OCI-LY7 (cell line): ENCODE measurements at regions of chr13 and their contacts with region 1.

Region 1: GRCh38 chr13:50123862-50124536 is 108.8 kb downstream of the KCNRG start:
- DNase-seq: no peak
- H3K4me3 ChIP-seq: peak overlapping the region; percentile 81
- H3K27ac ChIP-seq: peak overlapping the region; percentile 56
- H3K4me1 ChIP-seq: peaks cover 64% of the 10 kb centered on the region
- CTCF ChIP-seq: no peak

Region 2: DNA sequence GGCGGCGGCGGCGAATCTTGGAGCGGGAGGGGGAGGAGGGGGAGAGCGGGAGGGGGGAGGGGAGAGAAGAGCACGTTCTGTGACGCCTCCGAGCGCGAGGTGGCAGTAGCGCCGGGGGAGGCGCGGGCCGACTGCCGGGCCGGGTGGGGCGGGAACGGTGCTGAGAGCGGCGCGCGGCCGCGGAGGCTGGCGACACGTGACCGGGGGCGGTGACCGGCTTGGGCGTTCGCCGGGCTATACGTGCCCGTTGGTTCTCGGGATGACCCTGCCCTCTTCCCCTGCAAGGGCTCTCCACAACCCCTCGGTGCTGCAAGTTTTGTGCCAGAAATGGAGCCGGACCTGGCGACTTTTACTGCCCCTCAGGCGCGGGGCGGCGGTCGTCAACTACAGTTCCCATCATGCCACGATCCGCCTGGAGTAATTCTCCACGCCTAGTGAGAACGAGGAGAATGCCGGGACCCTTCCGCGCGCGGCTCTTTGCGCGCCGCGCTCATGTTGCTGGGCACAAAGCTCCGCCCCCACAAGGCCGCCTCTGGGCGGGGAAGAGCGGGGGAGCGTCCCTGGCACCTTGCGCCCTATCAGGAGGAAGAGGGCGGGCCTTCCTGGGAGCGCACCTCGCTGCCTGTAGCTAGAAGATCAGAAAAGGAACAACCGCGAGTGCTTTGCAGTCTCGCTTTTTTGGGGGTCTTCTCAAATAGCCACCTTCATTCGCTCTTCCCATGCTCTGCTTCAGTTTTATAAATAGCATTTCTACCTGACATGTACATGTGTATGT is 331.3 kb before region 1 on chr13 and contains the start of gene KPNA3:
- CTCF ChIA-PET with region 1: no interaction called
- POLR2A ChIA-PET with region 1: no interaction called
- intact Hi-C with region 1: loop called (anchors 5 kb)
- DNase-seq: peak; percentile 98
- H3K4me3 ChIP-seq: peak within 1 kb of the TSS; percentile 75
- H3K27ac ChIP-seq: peak within 1 kb of the TSS; percentile 90
- H3K4me1 ChIP-seq: peaks cover 24% of the 10 kb centered on the region
- CTCF ChIP-seq: no peak; the same call in 1 of the 2 replicates
- total RNA-seq, gene KPNA3: 17.2 and 18.2 TPM in 2 replicates

Region 3: GRCh38 chr13:49958321-49958720 is 165.7 kb before region 1 on chr13:
- CTCF ChIA-PET with region 1: no interaction called
- POLR2A ChIA-PET with region 1: no interaction called
- intact Hi-C with region 1: no loop called
- DNase-seq: no peak
- H3K4me3 ChIP-seq: no peak overlapping the region
- H3K27ac ChIP-seq: no peak overlapping the region
- H3K4me1 ChIP-seq: no peaks in the 10 kb centered on the region
- CTCF ChIP-seq: no peak

Region 4: GRCh38 chr13:49976314-49977258 is 147.4 kb before region 1 on chr13:
- CTCF ChIA-PET with region 1: no interaction called
- POLR2A ChIA-PET with region 1: interaction called, 3 read pairs
- intact Hi-C with region 1: loop called (anchors 5 kb)
- DNase-seq: peak; percentile 87
- H3K4me3 ChIP-seq: no peak overlapping the region
- H3K27ac ChIP-seq: no peak overlapping the region
- H3K4me1 ChIP-seq: peaks cover 8% of the 10 kb centered on the region
- CTCF ChIP-seq: peak; percentile 99

Region 5: GRCh38 chr13:50081679-50082425 is 42.1 kb before region 1 on chr13:
- CTCF ChIA-PET with region 1: interaction called, 4 read pairs
- POLR2A ChIA-PET with region 1: interaction called, 94 read pairs
- intact Hi-C with region 1: loop called (anchors 1 kb)
- DNase-seq: peak; percentile 98
- H3K4me3 ChIP-seq: peak overlapping the region; percentile 96
- H3K27ac ChIP-seq: peak overlapping the region; percentile 89
- H3K4me1 ChIP-seq: peaks cover 42% of the 10 kb centered on the region
- CTCF ChIP-seq: peak; percentile 63

Region 6: GRCh38 chr13:50376895-50377575 is 253.0 kb after region 1 on chr13:
- CTCF ChIA-PET with region 1: no interaction called
- POLR2A ChIA-PET with region 1: interaction called, 10 read pairs
- intact Hi-C with region 1: loop called (anchors 5 kb)
- DNase-seq: no peak
- H3K4me3 ChIP-seq: no peak overlapping the region
- H3K27ac ChIP-seq: no peak overlapping the region
- H3K4me1 ChIP-seq: peaks cover 42% of the 10 kb centered on the region
- CTCF ChIP-seq: peak; percentile 42; the same call in 1 of the 2 replicates

Region 7: DNA sequence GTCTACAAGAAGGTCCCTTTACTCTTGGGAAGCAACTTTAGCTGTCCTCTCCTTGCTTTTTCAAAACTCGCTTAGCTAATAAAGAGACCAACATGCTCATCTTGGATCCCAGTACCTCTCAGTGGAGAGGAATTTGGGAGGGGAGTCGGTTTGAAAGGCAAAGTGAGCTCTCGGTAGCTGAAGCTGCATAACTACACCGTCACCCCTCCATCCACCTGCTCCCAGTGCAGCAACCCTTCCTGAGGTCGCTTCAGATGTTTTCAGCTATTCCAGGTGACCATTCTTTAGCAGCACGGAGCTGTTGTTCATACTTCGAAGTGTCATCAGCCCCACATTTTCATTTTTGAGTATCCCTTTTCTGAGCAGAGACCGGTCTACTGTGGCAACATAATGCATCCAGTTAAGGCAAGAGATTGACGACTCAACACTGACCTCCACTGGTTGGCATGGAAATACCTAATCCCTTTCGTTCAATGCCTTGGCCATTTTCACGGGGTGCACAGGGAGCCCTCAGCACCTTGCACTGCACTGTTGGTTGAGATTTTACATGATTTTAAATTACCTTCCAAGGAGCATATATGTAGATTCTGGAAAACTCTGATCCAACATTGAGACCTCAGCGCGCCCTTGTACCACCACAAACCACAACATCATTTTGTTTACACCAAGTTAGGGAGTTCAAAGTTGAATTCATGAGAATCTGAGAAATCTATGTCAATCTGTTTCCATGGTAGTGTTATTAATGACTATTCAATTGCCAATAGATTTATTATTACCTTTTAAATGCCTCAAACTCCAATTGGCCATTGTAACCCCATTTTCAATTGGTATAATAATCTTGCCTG is 677.3 kb after region 1 on chr13:
- CTCF ChIA-PET with region 1: no interaction called
- POLR2A ChIA-PET with region 1: interaction called, 4 read pairs
- intact Hi-C with region 1: loop called (anchors 5 kb)
- DNase-seq: peak; percentile 90
- H3K4me3 ChIP-seq: no peak overlapping the region
- H3K27ac ChIP-seq: peak overlapping the region; percentile 2
- H3K4me1 ChIP-seq: peaks cover 35% of the 10 kb centered on the region
- CTCF ChIP-seq: peak; percentile 93